A673 (cell line): ENCODE measurements at regions of chr3 and their contacts with region 1.

Region 1: GRCh38 chr3:12024959-12025645 is 20.9 kb downstream of the SYN2 start:
- DNase-seq: no peak
- H3K4me3 ChIP-seq: no peak overlapping the region
- H3K27ac ChIP-seq: no peak overlapping the region
- H3K4me1 ChIP-seq: no peaks in the 10 kb centered on the region
- H3K27me3 ChIP-seq: peaks cover 9% of the 10 kb centered on the region
- CTCF ChIP-seq: no peak

Region 2: DNA sequence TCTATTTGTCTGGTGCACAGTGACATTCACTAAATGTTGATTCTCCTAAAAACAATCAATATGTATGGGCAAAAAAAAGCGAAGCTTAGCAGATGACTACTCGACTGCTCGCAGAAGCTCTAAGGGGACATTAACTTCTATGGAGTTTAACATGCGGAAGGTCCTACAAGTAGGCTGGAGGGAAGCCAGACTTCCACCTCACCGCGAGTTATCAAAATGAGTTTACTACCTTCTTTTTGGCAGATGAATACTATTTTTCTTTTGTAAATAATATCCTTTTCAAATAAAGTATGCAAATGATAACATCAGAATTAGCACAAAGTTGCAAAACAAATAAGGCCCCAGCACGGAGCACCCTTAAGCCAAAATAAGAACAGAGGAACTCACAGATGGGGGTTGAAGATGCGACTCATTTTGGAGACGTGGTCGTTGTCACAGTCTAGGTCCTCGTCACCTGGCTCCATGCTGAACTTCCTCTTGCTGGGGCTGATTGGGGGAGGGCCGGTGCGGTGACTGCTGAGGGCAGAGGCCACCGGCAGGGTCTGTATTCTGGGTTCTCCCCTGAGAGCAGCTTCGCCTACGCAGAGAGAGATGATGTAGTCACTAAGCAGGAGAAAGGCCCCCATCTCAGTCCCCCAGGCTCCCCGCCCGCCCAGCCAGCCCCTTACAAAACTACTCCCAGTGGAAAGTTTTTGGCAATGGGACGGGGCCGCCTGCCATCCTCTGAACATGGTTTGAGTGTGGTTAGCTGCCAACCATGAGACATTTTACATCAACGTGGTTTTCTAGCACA is 423.5 kb before region 1 on chr3:
- CTCF ChIA-PET with region 1: no interaction called
- POLR2A ChIA-PET with region 1: interaction called, 10 read pairs
- intact Hi-C with region 1: no loop called
- DNase-seq: no peak
- H3K4me3 ChIP-seq: no peak overlapping the region
- H3K27ac ChIP-seq: peak overlapping the region; percentile 20
- H3K4me1 ChIP-seq: peaks cover 46% of the 10 kb centered on the region
- H3K27me3 ChIP-seq: no peaks in the 10 kb centered on the region
- CTCF ChIP-seq: no peak

Region 3: DNA sequence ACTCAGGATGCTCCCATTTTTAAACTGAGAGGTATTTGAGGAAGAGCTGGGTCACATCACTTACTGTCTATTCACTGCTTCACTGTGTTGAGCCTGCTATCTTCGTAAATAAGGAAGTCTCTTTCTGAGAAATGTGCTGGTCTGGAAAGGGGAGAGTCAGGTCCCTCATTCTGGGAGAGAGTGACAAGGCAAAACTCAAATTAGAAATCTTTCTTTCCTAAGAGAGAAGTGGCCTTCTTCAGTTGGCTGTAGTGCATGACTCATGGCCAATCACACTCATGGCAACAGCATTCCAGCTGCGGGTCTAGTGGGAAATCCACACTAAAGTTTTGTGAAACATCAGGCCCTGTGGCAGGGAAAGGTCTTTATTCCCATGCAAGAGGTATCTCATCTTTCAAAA is 145.1 kb after region 1 on chr3:
- CTCF ChIA-PET with region 1: no interaction called
- POLR2A ChIA-PET with region 1: no interaction called
- intact Hi-C with region 1: no loop called
- DNase-seq: no peak
- H3K4me3 ChIP-seq: no peak overlapping the region
- H3K27ac ChIP-seq: no peak overlapping the region
- H3K4me1 ChIP-seq: no peaks in the 10 kb centered on the region
- H3K27me3 ChIP-seq: no peaks in the 10 kb centered on the region
- CTCF ChIP-seq: no peak